Prostate gland (tissue), 2 donors: ENCODE measurements at regions of chr1 and their contacts with region 1.

Region 1: DNA sequence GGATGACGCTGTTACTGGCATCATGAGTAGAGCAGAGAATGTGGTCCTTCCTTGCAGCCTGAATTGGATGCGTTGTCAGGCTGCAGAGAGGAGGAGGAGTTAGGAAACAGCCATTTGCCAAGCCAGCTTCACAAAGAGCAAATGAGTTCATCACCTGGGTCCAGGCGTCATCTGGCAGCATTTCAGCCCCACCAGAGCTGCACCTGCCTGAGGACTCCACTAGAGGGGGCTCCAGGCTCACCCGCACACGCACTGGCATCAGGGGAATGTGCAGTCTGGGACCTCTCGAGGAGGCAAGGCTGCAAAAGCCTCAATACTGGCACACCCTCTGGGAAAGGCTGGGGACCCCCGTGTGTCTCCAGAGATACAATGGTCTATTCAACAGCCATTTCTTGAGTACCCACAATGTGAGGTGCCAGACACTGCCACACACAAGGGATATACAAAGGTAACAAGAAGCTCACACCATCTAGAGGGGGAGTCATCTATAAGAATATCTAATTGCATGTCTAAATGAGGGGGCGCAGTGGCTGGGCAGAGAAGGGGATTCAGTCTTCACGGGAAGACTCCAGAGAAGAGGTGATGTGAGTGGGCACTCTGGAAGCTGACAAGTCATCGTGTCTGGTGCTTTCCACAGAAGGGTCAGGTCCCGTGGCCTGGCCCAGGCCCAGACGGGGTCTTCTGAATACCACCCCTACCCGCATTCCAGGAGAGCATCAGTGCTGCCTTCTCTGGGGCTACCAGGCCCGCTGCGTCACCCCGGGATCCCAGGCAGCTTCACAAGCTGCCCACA is 53.5 kb upstream of the CNTN2 start:
- DNase-seq: peak; percentile 35
- H3K4me3 ChIP-seq: no peak overlapping the region
- H3K27ac ChIP-seq: no peak overlapping the region
- H3K4me1 ChIP-seq: no peaks in the 10 kb centered on the region
- H3K27me3 ChIP-seq: no peaks in the 10 kb centered on the region
- CTCF ChIP-seq: peak; percentile 48 to 93 (median 84)
- POLR2A ChIP-seq: no peak

Region 2: GRCh38 chr1:204746838-204747442 is 242.5 kb before region 1 on chr1:
- intact Hi-C with region 1: no loop called
- DNase-seq: peak; percentile 24
- H3K4me3 ChIP-seq: no peak overlapping the region
- H3K27ac ChIP-seq: no peak overlapping the region
- H3K4me1 ChIP-seq: no peaks in the 10 kb centered on the region
- H3K27me3 ChIP-seq: no peaks in the 10 kb centered on the region
- CTCF ChIP-seq: peak; percentile 34 to 69 (median 48)
- POLR2A ChIP-seq: no peak

Region 3: GRCh38 chr1:204814181-204814884 is 175.1 kb before region 1 on chr1:
- intact Hi-C with region 1: no loop called
- DNase-seq: no peak
- H3K4me3 ChIP-seq: no peak overlapping the region
- H3K27ac ChIP-seq: no peak overlapping the region
- H3K4me1 ChIP-seq: no peaks in the 10 kb centered on the region
- H3K27me3 ChIP-seq: no peaks in the 10 kb centered on the region
- CTCF ChIP-seq: no peak
- POLR2A ChIP-seq: no peak

Region 4: GRCh38 chr1:205061665-205062069 is 72.2 kb after region 1 on chr1:
- intact Hi-C with region 1: loop called (anchors 2 kb)
- DNase-seq: peak; percentile 63
- H3K4me3 ChIP-seq: no peak overlapping the region
- H3K27ac ChIP-seq: no peak overlapping the region
- H3K4me1 ChIP-seq: no peaks in the 10 kb centered on the region
- H3K27me3 ChIP-seq: no peaks in the 10 kb centered on the region
- CTCF ChIP-seq: peak; percentile 67 to 91 (median 88)
- POLR2A ChIP-seq: no peak

Region 5: GRCh38 chr1:205141236-205142101 is 152.0 kb after region 1 on chr1:
- intact Hi-C with region 1: loop called (anchors 5 kb)
- DNase-seq: peak; percentile 62
- H3K4me3 ChIP-seq: no peak overlapping the region
- H3K27ac ChIP-seq: no peak overlapping the region
- H3K4me1 ChIP-seq: no peaks in the 10 kb centered on the region
- H3K27me3 ChIP-seq: no peaks in the 10 kb centered on the region
- CTCF ChIP-seq: peak in 3 of 4 experiments; percentile 68 to 72 (median 71)
- POLR2A ChIP-seq: no peak